Activated B cell treated with CpG ODN at 0.5 μM for 24 hours (primary cell): ENCODE measurements at regions of chr1 and their contacts with region 1.

Region 1: DNA sequence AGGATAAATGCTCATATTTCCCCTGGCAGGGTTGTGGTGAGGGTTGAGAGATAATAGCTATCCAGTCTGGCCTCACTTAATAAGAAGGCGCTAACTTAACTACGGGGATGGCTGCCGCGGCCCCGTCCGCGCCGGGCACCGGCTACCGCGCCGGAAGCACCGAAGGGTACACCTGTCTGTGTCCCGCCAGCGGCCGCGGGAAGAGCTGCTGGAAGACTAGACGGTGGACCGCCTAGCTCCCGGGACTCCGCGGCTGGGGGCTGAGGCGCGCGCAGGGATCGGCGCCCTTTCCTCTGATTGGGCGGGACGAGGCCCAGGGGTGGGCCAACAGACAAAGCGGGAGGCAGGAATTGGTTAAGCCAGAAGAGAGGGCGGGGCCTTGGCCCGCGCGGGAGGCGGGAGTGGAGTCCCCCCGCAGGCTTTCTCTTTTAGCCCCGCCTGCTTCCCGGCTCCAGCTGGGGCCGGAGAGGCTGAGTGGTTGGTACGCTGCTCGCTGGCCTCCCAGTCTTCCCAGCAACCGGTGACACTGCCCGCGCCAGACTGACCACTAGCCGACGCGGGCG is at the start of gene ZNF672:
- DNase-seq: peak; percentile 89
- ATAC-seq: peak; percentile 83
- H3K4me3 Mint-ChIP-seq: no peak within 1 kb of the TSS
- H3K27ac Mint-ChIP-seq: peak within 1 kb of the TSS; percentile 98
- H3K4me1 Mint-ChIP-seq: peaks cover 39% of the 10 kb centered on the region
- H3K27me3 Mint-ChIP-seq: no peaks in the 10 kb centered on the region
- CTCF ChIP-seq: no peak
- total RNA-seq, gene ZNF672: 47.0 and 52.2 TPM in 2 replicates

Region 2: DNA sequence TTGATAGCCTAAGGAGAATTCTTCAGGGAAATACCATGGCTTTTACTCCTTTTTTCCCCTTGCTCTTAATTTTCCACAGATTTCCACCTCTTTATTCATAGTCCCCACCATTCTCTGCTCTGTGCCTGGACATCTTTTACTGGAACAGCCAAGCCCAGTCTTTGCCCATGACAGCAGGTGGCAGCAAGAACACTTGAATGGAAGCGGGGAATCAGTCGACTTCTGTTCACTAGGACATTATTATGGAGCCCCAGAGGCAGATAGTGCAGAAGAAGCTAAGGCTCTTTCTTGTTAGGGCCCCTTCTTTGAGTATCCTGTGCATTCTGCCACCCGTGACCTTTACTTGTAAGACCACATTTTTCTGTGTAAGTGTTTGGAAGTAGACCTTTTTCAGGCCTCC is 141.6 kb before region 1 on chr1:
- CTCF ChIA-PET with region 1: no interaction called
- POLR2A ChIA-PET with region 1: no interaction called
- intact Hi-C with region 1: no loop called
- DNase-seq: no peak
- ATAC-seq: no peak
- H3K4me3 Mint-ChIP-seq: no peak overlapping the region
- H3K27ac Mint-ChIP-seq: peak overlapping the region; percentile 61
- H3K4me1 Mint-ChIP-seq: peaks cover 16% of the 10 kb centered on the region
- H3K27me3 Mint-ChIP-seq: no peaks in the 10 kb centered on the region
- CTCF ChIP-seq: no peak

Region 3: DNA sequence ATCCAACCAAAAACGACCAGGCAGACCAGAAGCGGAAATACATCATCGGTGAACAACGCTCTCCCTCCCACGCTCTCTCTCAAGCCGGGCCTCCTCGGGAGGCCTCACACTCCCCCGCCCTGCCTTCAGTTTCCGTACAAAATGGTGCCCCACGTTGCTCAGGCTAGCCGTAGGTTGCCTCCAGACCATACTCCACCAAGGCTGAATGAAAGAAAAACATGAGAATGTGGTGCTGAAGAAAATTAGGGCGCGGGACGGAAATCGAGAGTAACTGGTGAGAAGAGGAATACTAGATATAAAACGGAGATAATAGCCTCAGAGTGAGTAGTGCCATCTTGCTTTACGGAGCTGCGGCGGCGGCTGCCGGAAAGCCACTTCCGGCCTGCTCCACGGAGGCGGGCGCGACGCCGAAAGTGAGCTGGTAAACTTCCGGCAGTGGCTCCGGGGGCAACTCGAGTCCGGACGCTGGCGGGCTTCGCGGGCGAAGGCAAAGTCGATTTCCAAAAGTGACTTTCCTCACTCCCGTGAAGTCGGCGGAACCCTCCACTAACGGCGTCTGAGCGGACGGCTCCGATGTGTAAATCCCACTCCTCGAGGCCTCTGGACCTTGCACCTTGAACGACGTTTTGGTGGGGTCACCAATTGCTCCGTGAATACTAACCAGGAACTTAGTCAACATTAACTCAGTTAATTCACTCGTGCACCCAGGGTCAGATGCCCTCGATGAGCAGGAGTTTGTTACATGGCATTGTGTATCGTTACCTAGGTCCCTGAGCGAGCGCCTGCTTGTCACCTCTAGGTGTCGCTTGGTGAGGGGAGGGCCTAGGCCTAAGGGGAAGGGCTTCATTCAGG is 11.7 kb before region 1 on chr1 and contains the start of gene SH3BP5L:
- CTCF ChIA-PET with region 1: interaction called, 29 read pairs
- POLR2A ChIA-PET with region 1: interaction called, 134 read pairs
- intact Hi-C with region 1: loop called (anchors 1 kb)
- DNase-seq: peak; percentile 78
- ATAC-seq: peak; percentile 84
- H3K4me3 Mint-ChIP-seq: peak within 1 kb of the TSS; percentile 93
- H3K27ac Mint-ChIP-seq: peak within 1 kb of the TSS; percentile 97
- H3K4me1 Mint-ChIP-seq: peaks cover 56% of the 10 kb centered on the region
- H3K27me3 Mint-ChIP-seq: no peaks in the 10 kb centered on the region
- CTCF ChIP-seq: no peak
- total RNA-seq, gene SH3BP5L: 26.3 and 27.3 TPM in 2 replicates

Region 4: GRCh38 chr1:248852481-248853405 is 14.9 kb after region 1 on chr1:
- CTCF ChIA-PET with region 1: interaction called, 31 read pairs
- POLR2A ChIA-PET with region 1: interaction called, 250 read pairs
- intact Hi-C with region 1: no loop called
- DNase-seq: no peak
- ATAC-seq: peak; percentile 64
- H3K4me3 Mint-ChIP-seq: no peak overlapping the region
- H3K27ac Mint-ChIP-seq: no peak overlapping the region
- H3K4me1 Mint-ChIP-seq: peaks cover 17% of the 10 kb centered on the region
- H3K27me3 Mint-ChIP-seq: no peaks in the 10 kb centered on the region
- CTCF ChIP-seq: no peak

Region 5: DNA sequence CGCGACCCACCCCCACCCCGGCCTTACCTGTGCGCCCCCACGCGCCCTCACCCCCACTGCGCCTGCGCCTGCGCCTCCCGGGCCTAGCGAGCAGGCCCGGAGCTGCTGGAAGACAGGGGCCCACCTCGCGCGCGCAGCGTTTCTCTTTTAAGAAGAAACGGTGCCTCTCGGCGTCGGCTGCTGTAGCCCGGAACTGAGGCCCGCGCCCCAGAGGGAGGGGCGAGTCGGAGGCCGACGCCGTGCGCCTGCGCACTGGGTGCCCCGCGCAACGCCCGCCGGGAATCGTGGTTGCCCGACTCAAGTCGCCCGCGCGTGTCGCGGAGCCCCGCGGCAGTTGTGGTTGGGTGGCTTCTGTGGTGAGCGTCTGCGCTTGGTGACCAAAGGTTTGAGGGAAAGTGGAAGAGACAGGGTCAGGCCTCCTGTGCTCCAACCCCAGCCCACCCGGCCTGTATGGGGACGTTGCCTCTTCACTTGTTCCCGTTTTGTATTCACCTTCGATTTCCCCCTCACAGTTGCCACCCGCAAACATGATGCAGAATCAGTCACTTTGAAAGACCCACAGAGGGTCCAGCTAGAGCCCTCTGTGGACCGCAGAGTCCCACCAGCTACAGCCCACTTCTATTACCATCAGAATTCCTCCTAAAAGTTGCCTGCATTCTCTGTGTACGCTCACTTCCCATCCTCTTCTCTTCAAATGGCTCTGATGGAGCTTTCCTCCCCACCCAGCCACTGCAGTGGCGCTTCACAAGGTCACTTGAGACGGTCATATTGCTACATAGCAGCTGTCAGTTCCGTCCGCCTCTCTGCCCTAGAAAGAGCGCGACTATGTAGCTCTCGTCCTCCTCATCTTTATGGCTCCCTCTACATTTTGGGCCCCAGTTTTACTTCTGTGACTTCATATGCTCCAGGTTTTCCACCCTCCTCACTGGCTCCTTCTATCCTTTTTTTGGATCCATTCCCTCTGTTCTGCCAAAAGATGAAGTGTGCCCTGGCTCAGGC is 21.3 kb after region 1 on chr1 and contains the start of gene ZNF692:
- CTCF ChIA-PET with region 1: interaction called, 31 read pairs
- POLR2A ChIA-PET with region 1: interaction called, 250 read pairs
- intact Hi-C with region 1: loop called (anchors 1 kb)
- DNase-seq: peak; percentile 97
- ATAC-seq: peak; percentile 88
- H3K4me3 Mint-ChIP-seq: peak within 1 kb of the TSS; percentile 87
- H3K27ac Mint-ChIP-seq: peak within 1 kb of the TSS; percentile 97
- H3K4me1 Mint-ChIP-seq: peaks cover 55% of the 10 kb centered on the region
- H3K27me3 Mint-ChIP-seq: no peaks in the 10 kb centered on the region
- CTCF ChIP-seq: no peak
- total RNA-seq, gene ZNF692: 36.4 and 40.3 TPM in 2 replicates

Region 6: DNA sequence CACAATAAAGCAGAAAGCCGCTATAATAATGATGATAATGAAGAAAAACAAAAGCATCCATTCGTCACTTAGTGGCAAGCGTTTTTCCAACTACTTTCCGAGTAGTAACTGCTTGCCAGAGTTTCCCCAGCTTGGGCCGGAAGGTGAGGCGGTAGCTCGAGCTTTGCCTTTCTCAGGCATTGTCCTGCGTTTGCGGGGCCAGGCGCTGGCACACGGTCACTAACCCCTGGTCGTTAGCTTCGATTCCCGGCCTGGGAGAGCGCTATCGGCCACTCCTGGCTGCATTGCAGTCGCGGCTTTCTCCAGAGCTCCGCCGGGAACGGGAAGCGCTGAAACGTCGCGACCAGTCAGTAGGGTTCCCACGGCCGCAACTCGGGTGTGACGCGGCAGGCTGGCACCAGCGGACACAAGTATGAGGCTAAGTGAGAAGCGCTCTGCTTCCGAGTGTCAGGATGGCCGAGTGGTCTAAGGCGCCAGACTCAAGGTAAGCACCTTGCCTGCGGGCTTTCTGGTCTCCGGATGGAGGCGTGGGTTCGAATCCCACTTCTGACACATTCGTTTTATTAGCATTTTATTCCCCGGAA is 35.6 kb after region 1 on chr1:
- CTCF ChIA-PET with region 1: no interaction called
- POLR2A ChIA-PET with region 1: interaction called, 30 read pairs
- intact Hi-C with region 1: loop called (anchors 1 kb)
- DNase-seq: peak; percentile 91
- ATAC-seq: peak; percentile 80
- H3K4me3 Mint-ChIP-seq: peak overlapping the region; percentile 95
- H3K27ac Mint-ChIP-seq: peak overlapping the region; percentile 97
- H3K4me1 Mint-ChIP-seq: peaks cover 19% of the 10 kb centered on the region
- H3K27me3 Mint-ChIP-seq: peaks cover 8% of the 10 kb centered on the region
- CTCF ChIP-seq: no peak

Region 7: GRCh38 chr1:248906009-248906752 is 68.3 kb after region 1 on chr1 and contains the start of gene PGBD2:
- CTCF ChIA-PET with region 1: no interaction called
- POLR2A ChIA-PET with region 1: interaction called, 18 read pairs
- intact Hi-C with region 1: loop called (anchors 1 kb)
- DNase-seq: peak; percentile 95
- ATAC-seq: peak; percentile 83
- H3K4me3 Mint-ChIP-seq: peak within 1 kb of the TSS; percentile 99
- H3K27ac Mint-ChIP-seq: peak within 1 kb of the TSS; percentile 99
- H3K4me1 Mint-ChIP-seq: peaks cover 46% of the 10 kb centered on the region
- H3K27me3 Mint-ChIP-seq: no peaks in the 10 kb centered on the region
- CTCF ChIP-seq: no peak
- total RNA-seq, gene PGBD2: 12.3 and 13.4 TPM in 2 replicates